Naive thymus-derived CD8-positive, alpha-beta T cell (primary cell): ENCODE measurements at regions of chr19 and their contacts with region 1.

Region 1: GRCh38 chr19:2274931-2275535 is 6.9 kb downstream of the PEAK3 start:
- DNase-seq: peak in 5 of 10 donors; percentile 56 to 85 (median 64)
- ATAC-seq: peak; percentile 17 to 24
- H3K4me3 Mint-ChIP-seq: peak overlapping the region in 8 of 10 donors; percentile 13 to 79 (median 32)
- H3K27ac Mint-ChIP-seq: peak overlapping the region in 9 of 10 donors; percentile 31 to 94 (median 87)
- H3K4me1 Mint-ChIP-seq: peaks cover 19 to 39% (median 37%) of the 10 kb centered on the region in 4 donors
- H3K27me3 Mint-ChIP-seq: no peaks in the 10 kb centered on the region

Region 2: GRCh38 chr19:2207991-2208860 is 66.8 kb before region 1 on chr19:
- POLR2A ChIA-PET with region 1: no interaction called
- DNase-seq: peak in 1 of 10 donors; percentile 5
- ATAC-seq: peak in 1 of 2 donors; percentile 44
- H3K4me3 Mint-ChIP-seq: no peak overlapping the region
- H3K27ac Mint-ChIP-seq: peak overlapping the region in 1 of 10 donors; percentile 57
- H3K4me1 Mint-ChIP-seq: peaks cover 0 to 8% (median 4%) of the 10 kb centered on the region in 4 donors
- H3K27me3 Mint-ChIP-seq: no peaks in the 10 kb centered on the region

Region 3: GRCh38 chr19:2315818-2316353 is 40.9 kb after region 1 on chr19:
- POLR2A ChIA-PET with region 1: interaction called, 12 read pairs
- DNase-seq: no peak
- ATAC-seq: peak; percentile 36 to 54
- H3K4me3 Mint-ChIP-seq: no peak overlapping the region
- H3K27ac Mint-ChIP-seq: peak overlapping the region in 2 of 10 donors; percentile 6 to 18
- H3K4me1 Mint-ChIP-seq: peaks cover 2 to 23% (median 4%) of the 10 kb centered on the region in 4 donors
- H3K27me3 Mint-ChIP-seq: peaks cover 7 to 28% (median 18%) of the 10 kb centered on the region in 5 donors